Heart left ventricle (tissue), 16 donors: ENCODE measurements at regions of chr17 and their contacts with region 1.

Region 1: GRCh38 chr17:1716076-1716995 is 6.2 kb upstream of the TLCD2 start:
- DNase-seq: peak; percentile 100
- ATAC-seq: peak; percentile 71 to 81 (median 78)
- H3K4me3 ChIP-seq: peak overlapping the region; percentile 82 to 100 (median 94)
- H3K27ac ChIP-seq: peak overlapping the region; percentile 96 to 100 (median 100)
- H3K4me1 ChIP-seq: peaks cover 9 to 62% (median 49%) of the 10 kb centered on the region in 12 donors
- H3K27me3 ChIP-seq: no peaks in the 10 kb centered on the region
- CTCF ChIP-seq: peak in 2 of 12 donors; percentile 5 to 28
- POLR2A ChIP-seq: peak; percentile 99 to 100

Region 2: GRCh38 chr17:1573916-1574696 is 142.2 kb before region 1 on chr17:
- intact Hi-C with region 1: loop called in 3 of 10 experiments (anchors 2 to 10 kb)
- DNase-seq: peak; percentile 85 to 95 (median 86)
- ATAC-seq: peak; percentile 42 to 73 (median 64)
- H3K4me3 ChIP-seq: peak overlapping the region in 1 of 12 donors; percentile 7
- H3K27ac ChIP-seq: peak overlapping the region in 11 of 12 donors; percentile 15 to 96 (median 59)
- H3K4me1 ChIP-seq: peaks cover 0 to 53% (median 35%) of the 10 kb centered on the region in 12 donors
- H3K27me3 ChIP-seq: no peaks in the 10 kb centered on the region
- CTCF ChIP-seq: peak; percentile 93 to 98 (median 97)
- POLR2A ChIP-seq: peak in 1 of 2 donors; percentile 27

Region 3: GRCh38 chr17:1673041-1673785 is 43.1 kb before region 1 on chr17:
- intact Hi-C with region 1: loop called in 6 of 10 experiments (anchors 1 to 5 kb)
- DNase-seq: no peak
- ATAC-seq: no peak
- H3K4me3 ChIP-seq: no peak overlapping the region
- H3K27ac ChIP-seq: no peak overlapping the region
- H3K4me1 ChIP-seq: peaks cover 3 to 19% (median 13%) of the 10 kb centered on the region in 12 donors
- H3K27me3 ChIP-seq: no peaks in the 10 kb centered on the region
- CTCF ChIP-seq: no peak
- POLR2A ChIP-seq: no peak

Region 4: DNA sequence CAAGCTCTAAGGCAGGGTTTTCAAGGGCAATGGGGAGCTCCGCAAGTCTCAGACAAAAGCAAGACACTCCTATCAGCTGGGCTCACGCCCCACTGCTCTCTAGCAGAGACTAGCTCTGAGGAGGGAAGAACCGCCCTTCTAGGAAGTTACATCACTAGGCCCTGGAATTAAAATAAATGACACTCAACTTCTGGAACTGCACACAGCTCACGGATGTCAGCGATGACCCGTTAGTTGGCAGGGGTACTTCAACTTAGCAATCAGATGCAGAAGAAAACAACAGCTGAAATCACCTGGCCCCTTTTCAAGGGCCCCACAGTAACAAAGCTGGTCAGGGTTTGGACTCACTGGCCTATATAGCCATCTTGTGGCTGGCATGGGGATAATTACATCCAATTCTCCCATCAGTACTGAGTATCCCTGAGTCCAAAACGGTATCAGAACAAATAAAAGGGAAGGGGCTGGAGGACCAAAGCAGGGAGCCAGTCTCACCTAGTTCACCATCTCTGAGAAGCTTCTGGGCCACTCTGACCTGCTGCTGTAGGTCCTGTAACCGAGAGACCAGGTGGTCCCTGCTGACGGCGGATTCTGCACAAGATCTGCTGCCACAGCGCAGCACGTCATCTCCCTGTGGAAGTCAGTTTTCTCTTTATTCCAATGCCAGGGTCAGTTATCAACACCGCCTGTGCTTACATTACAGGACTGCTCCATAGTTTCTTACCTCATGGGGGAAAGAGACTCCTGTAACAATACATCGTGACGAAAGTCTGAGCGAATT is 67.7 kb after region 1 on chr17:
- intact Hi-C with region 1: loop called in 8 of 10 experiments (anchors 1 to 5 kb)
- DNase-seq: peak in 4 of 5 donors; percentile 75 to 91 (median 82)
- ATAC-seq: peak; percentile 74 to 86 (median 80)
- H3K4me3 ChIP-seq: peak overlapping the region in 8 of 12 donors; percentile 12 to 43 (median 20)
- H3K27ac ChIP-seq: peak overlapping the region; percentile 83 to 97 (median 92)
- H3K4me1 ChIP-seq: peaks cover 5 to 89% (median 60%) of the 10 kb centered on the region in 12 donors
- H3K27me3 ChIP-seq: no peaks in the 10 kb centered on the region
- CTCF ChIP-seq: peak; percentile 45 to 81 (median 72)
- POLR2A ChIP-seq: peak in 1 of 2 donors; percentile 69

Region 5: GRCh38 chr17:2401426-2402221 is 685.3 kb after region 1 on chr17:
- intact Hi-C with region 1: loop called in 1 of 10 experiments (anchors 10 kb)
- DNase-seq: peak; percentile 100
- ATAC-seq: peak; percentile 60 to 79 (median 70)
- H3K4me3 ChIP-seq: peak overlapping the region; percentile 71 to 99 (median 92)
- H3K27ac ChIP-seq: peak overlapping the region; percentile 94 to 100 (median 99)
- H3K4me1 ChIP-seq: peaks cover 13 to 75% (median 60%) of the 10 kb centered on the region in 12 donors
- H3K27me3 ChIP-seq: no peaks in the 10 kb centered on the region
- CTCF ChIP-seq: no peak
- POLR2A ChIP-seq: no peak